ENCODE measurements at regions of chr1 and their contacts with region 1.

Region 1: GRCh38 chr1:93715529-93716126 is 34.0 kb upstream of the BCAR3 start:
- DNase-seq: no peak
- ATAC-seq: peak; percentile 75
- H3K4me3 ChIP-seq: peak overlapping the region; percentile 5; the same call in 1 of the 2 replicates
- H3K27ac ChIP-seq: peak overlapping the region; percentile 54
- H3K4me1 ChIP-seq: peaks cover 40% of the 10 kb centered on the region
- H3K27me3 ChIP-seq: no peaks in the 10 kb centered on the region
- CTCF ChIP-seq: no peak
- EP300 ChIP-seq: peak in 1 of 2 experiments; percentile 57; a peak in 2 of 4 replicates
- POLR2A ChIP-seq: no peak
- RAD21 ChIP-seq: no peak

Region 2: GRCh38 chr1:93200086-93200620 is 515.5 kb before region 1 on chr1:
- CTCF ChIA-PET with region 1: no interaction called
- POLR2A ChIA-PET with region 1: no interaction called
- RAD21 ChIA-PET with region 1: no interaction called
- SMC1A ChIA-PET with region 1: no interaction called
- in situ Hi-C with region 1: no loop called
- intact Hi-C with region 1: no loop called
- DNase-seq: no peak
- ATAC-seq: no peak
- H3K4me3 ChIP-seq: no peak overlapping the region
- H3K27ac ChIP-seq: no peak overlapping the region
- H3K4me1 ChIP-seq: no peaks in the 10 kb centered on the region
- H3K27me3 ChIP-seq: no peaks in the 10 kb centered on the region
- CTCF ChIP-seq: no peak
- EP300 ChIP-seq: no peak
- POLR2A ChIP-seq: no peak
- RAD21 ChIP-seq: no peak

Region 3: GRCh38 chr1:93686497-93687250 is 29.0 kb before region 1 on chr1:
- CTCF ChIA-PET with region 1: interaction called, 8 read pairs
- POLR2A ChIA-PET with region 1: interaction called, 9 read pairs
- RAD21 ChIA-PET with region 1: interaction called, 4 read pairs
- SMC1A ChIA-PET with region 1: interaction called, 25 read pairs
- in situ Hi-C with region 1: no loop called
- intact Hi-C with region 1: no loop called
- DNase-seq: no peak
- ATAC-seq: no peak
- H3K4me3 ChIP-seq: no peak overlapping the region
- H3K27ac ChIP-seq: no peak overlapping the region
- H3K4me1 ChIP-seq: peaks cover 16% of the 10 kb centered on the region
- H3K27me3 ChIP-seq: no peaks in the 10 kb centered on the region; a peak in 2 of 4 replicates
- CTCF ChIP-seq: no peak
- EP300 ChIP-seq: no peak
- POLR2A ChIP-seq: no peak
- RAD21 ChIP-seq: no peak

Region 4: GRCh38 chr1:93692983-93693591 is 22.5 kb before region 1 on chr1:
- CTCF ChIA-PET with region 1: interaction called, 6 read pairs
- POLR2A ChIA-PET with region 1: interaction called, 4 read pairs
- RAD21 ChIA-PET with region 1: interaction called, 7 read pairs
- SMC1A ChIA-PET with region 1: interaction called, 137 read pairs
- in situ Hi-C with region 1: no loop called
- intact Hi-C with region 1: no loop called
- DNase-seq: peak; percentile 63
- ATAC-seq: peak; percentile 88
- H3K4me3 ChIP-seq: no peak overlapping the region
- H3K27ac ChIP-seq: peak overlapping the region; percentile 30
- H3K4me1 ChIP-seq: peaks cover 44% of the 10 kb centered on the region
- H3K27me3 ChIP-seq: no peaks in the 10 kb centered on the region
- CTCF ChIP-seq: no peak
- EP300 ChIP-seq: peak in 1 of 2 experiments; percentile 14; a peak in 1 of 4 replicates
- POLR2A ChIP-seq: no peak
- RAD21 ChIP-seq: no peak

Region 5: DNA sequence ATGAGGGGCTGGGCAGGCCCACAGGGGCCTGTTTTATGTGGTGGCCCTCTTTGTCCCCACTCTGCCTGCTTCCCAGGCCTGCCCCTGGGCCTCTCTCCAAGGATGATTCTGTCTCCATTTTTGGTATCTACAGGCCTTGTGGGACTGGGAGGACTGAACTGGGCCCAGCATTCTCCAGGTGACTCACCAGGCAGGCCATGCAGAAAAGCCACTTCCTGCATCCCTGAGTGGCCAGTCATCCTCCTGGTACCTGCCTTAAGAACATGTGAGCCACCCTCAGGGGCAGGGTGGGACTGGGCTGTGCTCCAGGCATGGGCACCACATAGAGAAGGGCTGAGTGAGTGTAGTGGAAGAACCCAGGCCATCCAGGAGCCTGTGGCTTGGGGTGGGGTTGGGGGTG is 14.0 kb before region 1 on chr1:
- CTCF ChIA-PET with region 1: interaction called, 49 read pairs
- POLR2A ChIA-PET with region 1: interaction called, 25 read pairs
- RAD21 ChIA-PET with region 1: interaction called, 42 read pairs
- SMC1A ChIA-PET with region 1: interaction called, 137 read pairs
- in situ Hi-C with region 1: no loop called
- intact Hi-C with region 1: no loop called
- DNase-seq: no peak
- ATAC-seq: peak; percentile 45
- H3K4me3 ChIP-seq: no peak overlapping the region
- H3K27ac ChIP-seq: peak overlapping the region; percentile 63
- H3K4me1 ChIP-seq: peaks cover 54% of the 10 kb centered on the region
- H3K27me3 ChIP-seq: no peaks in the 10 kb centered on the region
- CTCF ChIP-seq: no peak
- EP300 ChIP-seq: no peak
- POLR2A ChIP-seq: no peak
- RAD21 ChIP-seq: no peak

Region 6: DNA sequence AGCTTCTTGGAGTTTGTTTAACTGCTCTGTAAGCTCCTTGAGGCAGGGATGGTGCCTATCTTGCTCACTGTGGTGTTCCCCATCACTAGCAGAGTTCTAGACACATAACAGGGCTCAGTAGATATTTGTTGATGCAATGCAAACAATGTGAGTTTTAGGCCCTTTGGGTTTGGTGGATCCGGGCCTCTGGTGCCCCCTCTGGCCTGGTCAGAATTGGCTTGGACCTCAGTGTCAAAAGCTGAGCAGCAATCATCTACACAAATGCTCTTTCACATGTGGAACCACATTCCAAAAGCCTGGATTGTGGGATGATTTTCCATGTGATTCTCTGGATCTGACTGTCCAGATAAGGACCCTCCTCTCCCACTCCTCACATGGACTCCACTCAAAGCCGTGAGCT is 19.4 kb after region 1 on chr1:
- CTCF ChIA-PET with region 1: interaction called, 4 read pairs
- POLR2A ChIA-PET with region 1: interaction called, 3 read pairs
- RAD21 ChIA-PET with region 1: interaction called, 5 read pairs
- SMC1A ChIA-PET with region 1: interaction called, 12 read pairs
- in situ Hi-C with region 1: no loop called
- intact Hi-C with region 1: no loop called
- DNase-seq: no peak
- ATAC-seq: peak; percentile 70
- H3K4me3 ChIP-seq: no peak overlapping the region
- H3K27ac ChIP-seq: no peak overlapping the region
- H3K4me1 ChIP-seq: peaks cover 11% of the 10 kb centered on the region
- H3K27me3 ChIP-seq: no peaks in the 10 kb centered on the region
- CTCF ChIP-seq: peak; percentile 28 to 52 (median 39)
- EP300 ChIP-seq: no peak
- POLR2A ChIP-seq: no peak
- RAD21 ChIP-seq: peak; percentile 39

Region 7: GRCh38 chr1:93744299-93744988 is 28.8 kb after region 1 on chr1:
- CTCF ChIA-PET with region 1: interaction called, 8 read pairs
- POLR2A ChIA-PET with region 1: interaction called, 5 read pairs
- RAD21 ChIA-PET with region 1: interaction called, 4 read pairs
- SMC1A ChIA-PET with region 1: interaction called, 26 read pairs
- in situ Hi-C with region 1: no loop called
- intact Hi-C with region 1: no loop called
- DNase-seq: peak; percentile 16
- ATAC-seq: peak; percentile 78
- H3K4me3 ChIP-seq: no peak overlapping the region
- H3K27ac ChIP-seq: no peak overlapping the region
- H3K4me1 ChIP-seq: peaks cover 17% of the 10 kb centered on the region
- H3K27me3 ChIP-seq: no peaks in the 10 kb centered on the region
- CTCF ChIP-seq: no peak
- EP300 ChIP-seq: no peak
- POLR2A ChIP-seq: no peak
- RAD21 ChIP-seq: no peak

Region 8: GRCh38 chr1:93749894-93750301 is 34.3 kb after region 1 on chr1:
- CTCF ChIA-PET with region 1: interaction called, 8 read pairs
- POLR2A ChIA-PET with region 1: interaction called, 5 read pairs
- RAD21 ChIA-PET with region 1: interaction called, 4 read pairs
- SMC1A ChIA-PET with region 1: interaction called, 26 read pairs
- in situ Hi-C with region 1: no loop called
- intact Hi-C with region 1: no loop called
- DNase-seq: no peak
- ATAC-seq: peak; percentile 56
- H3K4me3 ChIP-seq: no peak overlapping the region
- H3K27ac ChIP-seq: no peak overlapping the region
- H3K4me1 ChIP-seq: peaks cover 19% of the 10 kb centered on the region
- H3K27me3 ChIP-seq: no peaks in the 10 kb centered on the region
- CTCF ChIP-seq: peak in 2 of 3 experiments; percentile 9 to 41; a peak in 2 of 6 replicates
- EP300 ChIP-seq: no peak
- POLR2A ChIP-seq: no peak
- RAD21 ChIP-seq: peak; percentile 39; the same call in 1 of the 2 replicates

Measured in GM12878 (cell line).